CD8-positive, alpha-beta T cell (primary cell): ENCODE measurements at regions of chr17 and their contacts with region 1.

Region 1: GRCh38 chr17:50841949-50842354 is 6.6 kb downstream of the WFIKKN2 start:
- DNase-seq: peak in 8 of 9 experiments; percentile 21 to 67 (median 51)
- ATAC-seq: peak; percentile 69
- H3K4me3 ChIP-seq: no peak overlapping the region
- H3K4me3 Mint-ChIP-seq: no peak overlapping the region
- H3K27ac ChIP-seq: no peak overlapping the region
- H3K27ac Mint-ChIP-seq: no peak overlapping the region
- H3K4me1 ChIP-seq: no peaks in the 10 kb centered on the region
- H3K4me1 Mint-ChIP-seq: no peaks in the 10 kb centered on the region
- H3K27me3 ChIP-seq: no peaks in the 10 kb centered on the region
- H3K27me3 Mint-ChIP-seq: no peaks in the 10 kb centered on the region
- CTCF ChIP-seq: peak; percentile 62

Region 2: GRCh38 chr17:50754521-50754920 is 87.4 kb before region 1 on chr17:
- CTCF ChIA-PET with region 1: no interaction called
- POLR2A ChIA-PET with region 1: no interaction called
- intact Hi-C with region 1: no loop called
- DNase-seq: no peak
- ATAC-seq: no peak
- H3K4me3 ChIP-seq: no peak overlapping the region
- H3K4me3 Mint-ChIP-seq: no peak overlapping the region
- H3K27ac ChIP-seq: no peak overlapping the region
- H3K27ac Mint-ChIP-seq: no peak overlapping the region
- H3K4me1 ChIP-seq: no peaks in the 10 kb centered on the region
- H3K4me1 Mint-ChIP-seq: no peaks in the 10 kb centered on the region
- H3K27me3 ChIP-seq: no peaks in the 10 kb centered on the region
- H3K27me3 Mint-ChIP-seq: no peaks in the 10 kb centered on the region
- CTCF ChIP-seq: no peak

Region 3: DNA sequence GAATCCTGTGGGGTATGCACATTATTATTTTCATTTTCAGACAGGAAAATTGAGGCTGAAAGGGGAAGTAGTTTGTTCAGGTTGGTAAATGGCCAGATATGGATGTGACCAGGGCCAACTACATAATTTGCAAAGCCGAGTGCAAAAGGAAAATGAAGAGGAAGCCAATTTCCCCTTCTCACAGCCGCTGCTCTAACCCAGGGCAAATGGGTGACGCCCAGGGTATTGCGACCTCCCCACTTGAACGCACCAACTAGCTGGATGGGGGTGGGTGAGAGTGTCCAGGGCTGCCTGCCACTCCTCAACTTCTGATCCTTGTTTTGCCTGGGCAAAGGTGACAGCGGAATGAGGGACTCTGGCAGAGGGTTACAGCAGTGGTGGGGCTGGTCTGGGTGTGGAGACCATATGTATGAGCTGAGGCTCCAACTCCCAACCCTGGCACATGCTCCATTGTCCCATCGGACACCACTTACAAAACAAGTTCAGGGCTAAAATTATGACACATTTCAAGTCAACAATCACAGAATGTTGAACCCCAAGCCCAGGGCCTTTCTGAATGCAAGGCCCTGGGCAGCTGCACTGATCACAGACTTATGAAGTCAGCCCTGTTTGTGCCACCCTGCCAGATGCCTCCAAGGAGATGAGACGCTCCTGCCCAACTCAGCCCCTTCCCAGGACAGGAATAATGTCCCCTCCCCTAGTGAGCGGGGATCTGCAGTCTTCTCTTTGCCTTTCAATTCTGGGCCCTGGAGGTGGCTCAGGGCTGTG is 76.3 kb before region 1 on chr17:
- CTCF ChIA-PET with region 1: no interaction called
- POLR2A ChIA-PET with region 1: no interaction called
- intact Hi-C with region 1: no loop called
- DNase-seq: peak in 1 of 9 experiments; percentile 36
- ATAC-seq: no peak
- H3K4me3 ChIP-seq: no peak overlapping the region
- H3K4me3 Mint-ChIP-seq: no peak overlapping the region
- H3K27ac ChIP-seq: no peak overlapping the region
- H3K27ac Mint-ChIP-seq: no peak overlapping the region
- H3K4me1 ChIP-seq: peaks cover 10% of the 10 kb centered on the region
- H3K4me1 Mint-ChIP-seq: peaks cover 10% of the 10 kb centered on the region
- H3K27me3 ChIP-seq: peaks cover 0 to 2% of the 10 kb centered on the region in 2 experiments
- H3K27me3 Mint-ChIP-seq: peaks cover 12% of the 10 kb centered on the region
- CTCF ChIP-seq: no peak

Region 4: DNA sequence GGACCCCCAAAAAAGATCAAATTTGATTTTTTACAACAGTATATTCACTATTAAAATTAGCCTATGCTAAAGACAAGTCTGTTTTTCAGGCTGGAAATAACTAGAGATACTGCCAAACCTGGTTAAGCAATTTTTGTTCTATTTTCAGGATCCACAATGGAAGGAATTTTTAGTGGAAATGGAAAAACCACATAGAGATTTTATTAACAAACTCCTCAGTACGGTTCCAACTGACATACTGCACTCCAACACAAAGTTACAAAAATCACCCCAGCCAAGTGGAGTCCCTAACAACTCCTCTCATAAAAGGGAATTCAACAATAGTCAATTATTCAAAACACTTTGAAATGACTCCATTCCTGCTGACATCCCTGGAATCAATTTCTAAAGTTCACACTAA is 125.8 kb after region 1 on chr17:
- CTCF ChIA-PET with region 1: interaction called, 10 read pairs
- POLR2A ChIA-PET with region 1: no interaction called
- intact Hi-C with region 1: no loop called
- DNase-seq: no peak
- ATAC-seq: no peak
- H3K4me3 ChIP-seq: no peak overlapping the region
- H3K4me3 Mint-ChIP-seq: no peak overlapping the region
- H3K27ac ChIP-seq: no peak overlapping the region
- H3K27ac Mint-ChIP-seq: no peak overlapping the region
- H3K4me1 ChIP-seq: no peaks in the 10 kb centered on the region
- H3K4me1 Mint-ChIP-seq: peaks cover 4% of the 10 kb centered on the region
- H3K27me3 ChIP-seq: no peaks in the 10 kb centered on the region
- H3K27me3 Mint-ChIP-seq: no peaks in the 10 kb centered on the region
- CTCF ChIP-seq: no peak